ENCODE measurements at regions of chr22 and their contacts with region 1.

Region 1: DNA sequence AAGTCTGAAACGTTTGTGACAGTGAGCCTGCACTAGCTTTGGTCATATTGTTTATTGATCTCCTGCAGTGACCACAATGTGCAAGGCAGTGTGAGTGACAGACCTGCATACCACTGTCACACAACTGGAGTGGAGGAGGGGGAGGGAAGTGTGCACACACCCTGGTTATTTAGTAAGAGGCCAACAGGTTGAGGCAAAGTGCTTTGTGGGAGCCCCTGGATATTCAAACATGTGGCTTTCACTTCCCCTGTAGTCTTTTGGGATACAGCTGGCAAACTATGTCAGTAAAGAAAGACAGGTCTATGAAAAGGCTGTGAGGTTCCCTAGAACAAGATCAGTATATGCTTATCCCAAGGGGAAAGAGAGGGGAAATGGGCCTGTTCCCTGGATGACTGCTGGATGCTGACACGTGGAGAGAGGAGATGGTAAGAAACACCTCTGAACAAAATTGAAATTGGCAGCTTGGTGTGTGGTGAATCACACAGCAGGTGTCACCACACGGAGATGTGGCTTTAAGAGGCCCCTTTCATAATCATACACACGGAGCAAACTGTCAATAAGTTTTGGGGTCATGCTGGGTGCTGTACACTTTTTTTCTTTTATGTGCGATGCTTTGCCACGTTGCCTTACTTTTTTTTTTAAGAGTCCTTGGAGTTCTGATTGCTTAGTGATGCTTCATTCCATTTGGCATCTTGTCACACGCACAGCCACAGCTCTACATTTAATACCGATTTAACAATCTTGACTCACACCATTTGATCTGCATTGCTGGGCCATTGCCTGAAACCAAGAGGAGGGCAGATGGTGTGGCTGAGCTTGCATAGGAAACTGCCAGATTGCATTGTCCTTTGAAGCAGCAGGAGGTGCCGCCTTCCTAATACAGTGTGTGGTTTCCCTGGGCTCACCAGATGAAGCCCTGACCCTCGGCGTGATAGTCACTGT is 11.3 kb downstream of the OSBP2 start:
- DNase-seq: no peak
- ATAC-seq: peak; percentile 36
- H3K4me3 ChIP-seq: no peak overlapping the region
- H3K4me3 Mint-ChIP-seq: peak overlapping the region in 1 of 10 donors; percentile 26
- H3K27ac ChIP-seq: no peak overlapping the region
- H3K27ac Mint-ChIP-seq: peak overlapping the region in 1 of 9 donors; percentile 66
- H3K4me1 ChIP-seq: peaks cover 0 to 7% of the 10 kb centered on the region in 2 donors
- H3K4me1 Mint-ChIP-seq: peaks cover 0 to 27% (median 3%) of the 10 kb centered on the region in 7 donors
- H3K27me3 ChIP-seq: no peaks in the 10 kb centered on the region
- H3K27me3 Mint-ChIP-seq: peaks cover 0 to 3% (median 0%) of the 10 kb centered on the region in 5 donors

Region 2: DNA sequence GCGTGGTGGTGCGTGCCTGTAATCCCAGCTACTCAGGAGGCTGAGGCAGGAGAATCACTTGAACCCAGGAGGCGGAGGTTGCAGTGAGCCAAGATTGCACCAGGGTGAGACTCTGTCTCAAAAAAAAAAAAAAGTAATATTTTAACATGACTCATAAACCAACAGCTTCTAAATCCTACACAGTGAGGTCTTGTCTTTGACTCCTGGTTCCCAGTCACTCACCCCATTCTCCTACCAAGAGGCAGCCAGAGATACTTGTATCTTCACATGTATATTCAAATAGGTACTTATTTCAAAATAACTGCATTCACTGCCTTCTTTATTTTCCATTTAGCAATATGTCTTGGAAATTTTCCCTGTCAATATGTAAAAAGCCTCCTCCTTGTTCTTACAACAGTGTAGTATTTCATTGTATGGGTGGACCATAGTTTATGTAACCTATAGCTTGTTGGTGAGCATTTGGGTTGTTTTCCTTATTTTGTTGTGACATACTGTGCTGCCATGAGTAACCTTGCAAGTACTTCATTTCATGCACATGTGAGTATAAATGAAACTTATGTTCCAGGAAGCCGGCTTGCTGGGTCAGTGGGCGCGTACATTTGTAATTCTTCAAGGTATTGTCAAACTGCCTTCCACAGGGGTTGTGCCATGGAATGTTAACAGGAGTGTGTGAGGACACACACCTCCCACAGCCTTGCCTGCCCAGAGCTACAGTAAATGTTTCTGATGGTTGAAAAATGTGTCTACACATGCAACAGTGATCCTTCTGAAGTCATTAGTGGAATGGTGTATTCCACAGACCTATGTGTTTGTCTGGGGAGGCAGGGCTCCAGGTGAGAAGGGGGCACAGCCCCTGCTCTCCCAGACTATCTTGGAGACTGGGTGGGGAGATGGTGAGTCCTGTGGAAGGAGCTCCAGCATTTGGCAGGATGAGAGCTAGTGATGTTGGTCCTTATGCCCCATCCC is 36.6 kb after region 1 on chr22:
- CTCF ChIA-PET with region 1: no interaction called
- POLR2A ChIA-PET with region 1: no interaction called
- intact Hi-C with region 1: loop called in 1 of 2 experiments (anchors 5 kb)
- DNase-seq: no peak
- ATAC-seq: no peak
- H3K4me3 ChIP-seq: no peak overlapping the region
- H3K4me3 Mint-ChIP-seq: peak overlapping the region in 1 of 10 donors; percentile 27
- H3K27ac ChIP-seq: no peak overlapping the region
- H3K27ac Mint-ChIP-seq: peak overlapping the region in 1 of 9 donors; percentile 89
- H3K4me1 ChIP-seq: no peaks in the 10 kb centered on the region
- H3K4me1 Mint-ChIP-seq: peaks cover 0 to 67% (median 0%) of the 10 kb centered on the region in 7 donors
- H3K27me3 ChIP-seq: no peaks in the 10 kb centered on the region
- H3K27me3 Mint-ChIP-seq: no peaks in the 10 kb centered on the region

Measured in naive thymus-derived CD4-positive, alpha-beta T cell (primary cell).